Left lung (tissue), 14 donors: ENCODE measurements at regions of chr7 and their contacts with region 1.

Region 1: GRCh38 chr7:121081327-121081936 is 92.9 kb downstream of the CPED1 start:
- DNase-seq: peak in 2 of 4 donors; percentile 57 to 74
- ATAC-seq: peak; percentile 85
- H3K4me3 ChIP-seq: no peak overlapping the region
- H3K27ac ChIP-seq: no peak overlapping the region
- H3K4me1 ChIP-seq: no peaks in the 10 kb centered on the region
- H3K27me3 ChIP-seq: no peaks in the 10 kb centered on the region
- CTCF ChIP-seq: peak; percentile 66 to 67

Region 2: GRCh38 chr7:120987683-120988590 is 93.5 kb before region 1 on chr7:
- intact Hi-C with region 1: loop called in 1 of 2 experiments (anchors 2 kb)
- DNase-seq: peak; percentile 89 to 96 (median 93)
- ATAC-seq: peak; percentile 96
- H3K4me3 ChIP-seq: peak overlapping the region; percentile 18 to 45
- H3K27ac ChIP-seq: peak overlapping the region; percentile 61 to 91
- H3K4me1 ChIP-seq: peaks cover 0 to 36% of the 10 kb centered on the region in 2 donors
- H3K27me3 ChIP-seq: peaks cover 0 to 34% of the 10 kb centered on the region in 2 donors
- CTCF ChIP-seq: peak; percentile 86 to 99